ENCODE measurements at regions of chr9 and their contacts with region 1.

Region 1: GRCh38 chr9:114930056-114930812 is at the start of gene TNFSF8:
- DNase-seq: peak; percentile 90
- ATAC-seq: peak; percentile 68
- H3K4me3 Mint-ChIP-seq: peak within 1 kb of the TSS; percentile 99
- H3K27ac Mint-ChIP-seq: peak within 1 kb of the TSS; percentile 99
- H3K4me1 Mint-ChIP-seq: peaks cover 54% of the 10 kb centered on the region
- H3K27me3 Mint-ChIP-seq: no peaks in the 10 kb centered on the region
- total RNA-seq, gene TNFSF8: 52.6 to 55.3 TPM

Region 2: DNA sequence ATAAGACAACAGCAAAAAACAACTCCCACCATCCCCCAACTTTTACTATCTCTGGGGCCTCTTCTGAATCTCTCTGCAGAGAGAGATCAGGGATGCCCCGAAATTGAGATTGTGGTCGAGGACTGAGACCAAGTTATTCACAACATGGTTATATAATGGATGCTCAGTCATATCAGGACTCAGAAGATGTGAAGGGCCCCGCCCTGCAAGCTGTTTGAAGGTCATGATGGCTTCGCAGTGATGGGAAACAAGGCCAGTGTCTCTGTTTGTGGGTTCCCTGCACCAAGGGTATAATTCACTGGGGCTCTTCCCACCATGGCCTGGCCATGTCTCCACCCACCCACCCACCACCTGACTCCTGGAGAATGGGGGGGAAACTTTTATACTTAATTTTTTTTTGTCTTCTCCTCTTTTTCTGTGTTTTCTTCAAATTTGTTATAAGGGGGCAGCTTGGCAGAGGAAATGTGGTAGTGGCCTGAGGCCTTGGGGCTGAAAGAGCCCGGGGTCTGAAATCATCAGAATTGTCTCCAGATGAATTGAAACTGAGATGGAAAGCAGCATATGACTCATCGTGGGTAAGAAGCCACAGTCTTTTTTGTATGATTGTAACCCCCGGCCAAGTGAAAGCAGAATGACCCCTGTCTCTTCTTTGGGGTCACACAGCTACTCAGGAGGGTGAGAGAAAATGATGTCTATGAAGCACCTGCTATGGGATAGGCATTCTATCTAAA is 233.3 kb before region 1 on chr9:
- CTCF ChIA-PET with region 1: interaction called, 6 read pairs
- POLR2A ChIA-PET with region 1: interaction called, 42 read pairs
- DNase-seq: peak; percentile 89
- ATAC-seq: peak; percentile 76
- H3K4me3 Mint-ChIP-seq: peak overlapping the region; percentile 52
- H3K27ac Mint-ChIP-seq: peak overlapping the region; percentile 98
- H3K4me1 Mint-ChIP-seq: peaks cover 94% of the 10 kb centered on the region
- H3K27me3 Mint-ChIP-seq: no peaks in the 10 kb centered on the region

Region 3: GRCh38 chr9:114894801-114895433 is 35.3 kb before region 1 on chr9:
- CTCF ChIA-PET with region 1: interaction called, 18 read pairs
- POLR2A ChIA-PET with region 1: interaction called, 28 read pairs
- DNase-seq: peak; percentile 59
- ATAC-seq: peak; percentile 22
- H3K4me3 Mint-ChIP-seq: no peak overlapping the region
- H3K27ac Mint-ChIP-seq: peak overlapping the region; percentile 79
- H3K4me1 Mint-ChIP-seq: peaks cover 52% of the 10 kb centered on the region
- H3K27me3 Mint-ChIP-seq: no peaks in the 10 kb centered on the region

Region 4: DNA sequence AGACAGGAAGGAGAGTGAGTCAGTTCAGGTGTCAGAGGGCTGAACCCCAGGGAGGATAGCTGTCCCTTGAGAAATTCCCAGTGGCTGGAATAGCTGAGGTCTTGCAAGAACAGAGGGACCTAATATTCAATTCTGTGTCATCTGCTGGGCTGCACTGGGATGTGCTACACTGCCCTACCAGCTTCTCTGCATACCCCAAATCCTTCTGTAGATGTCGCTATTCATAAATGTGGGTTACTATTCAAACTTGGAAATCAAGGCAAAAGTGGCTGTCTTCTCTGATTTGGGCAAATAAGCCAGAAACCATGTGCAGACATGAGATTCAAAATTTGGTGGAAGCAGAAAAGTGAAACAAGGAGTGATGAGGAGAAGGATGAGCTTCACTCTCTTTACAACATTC is 16.1 kb before region 1 on chr9:
- CTCF ChIA-PET with region 1: interaction called, 114 read pairs
- POLR2A ChIA-PET with region 1: interaction called, 90 read pairs
- DNase-seq: no peak
- ATAC-seq: no peak
- H3K4me3 Mint-ChIP-seq: no peak overlapping the region
- H3K27ac Mint-ChIP-seq: peak overlapping the region; percentile 50
- H3K4me1 Mint-ChIP-seq: peaks cover 86% of the 10 kb centered on the region
- H3K27me3 Mint-ChIP-seq: no peaks in the 10 kb centered on the region

Region 5: GRCh38 chr9:114945616-114946412 is 15.6 kb after region 1 on chr9:
- CTCF ChIA-PET with region 1: interaction called, 12 read pairs
- POLR2A ChIA-PET with region 1: interaction called, 18 read pairs
- DNase-seq: no peak
- ATAC-seq: no peak
- H3K4me3 Mint-ChIP-seq: no peak overlapping the region
- H3K27ac Mint-ChIP-seq: no peak overlapping the region
- H3K4me1 Mint-ChIP-seq: peaks cover 25% of the 10 kb centered on the region
- H3K27me3 Mint-ChIP-seq: no peaks in the 10 kb centered on the region

Region 6: DNA sequence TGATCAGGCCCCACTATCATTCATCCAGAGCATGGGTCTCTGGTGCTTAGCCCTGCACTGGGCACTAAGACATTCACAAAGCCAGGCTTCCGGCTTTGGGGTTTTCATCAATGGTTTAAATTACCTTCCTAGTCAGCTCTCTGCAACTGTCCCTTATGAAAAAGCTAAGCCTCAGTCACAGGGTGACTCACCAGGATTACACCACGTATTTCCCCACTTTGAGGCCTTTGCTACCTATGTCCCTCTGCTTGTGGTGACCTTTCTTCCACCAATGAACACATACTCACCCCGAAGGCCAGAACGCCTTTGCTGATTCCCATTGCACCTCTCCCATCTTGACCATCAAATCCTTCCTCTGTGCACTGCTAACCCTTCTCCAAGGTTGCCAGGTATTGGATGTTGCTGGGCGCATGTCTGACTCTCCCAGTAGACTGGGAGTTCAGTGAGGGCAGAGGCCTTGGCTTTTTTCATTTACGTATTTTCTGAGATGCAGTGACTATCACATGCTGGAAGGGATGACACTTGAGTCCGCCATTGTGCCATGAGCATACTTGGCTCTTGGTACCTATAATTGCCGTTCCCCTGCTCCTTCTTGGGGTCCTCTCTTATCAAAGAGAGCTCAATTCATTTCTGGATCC is 58.8 kb after region 1 on chr9:
- CTCF ChIA-PET with region 1: interaction called, 10 read pairs
- POLR2A ChIA-PET with region 1: interaction called, 20 read pairs
- DNase-seq: peak; percentile 26
- ATAC-seq: peak; percentile 7
- H3K4me3 Mint-ChIP-seq: no peak overlapping the region
- H3K27ac Mint-ChIP-seq: peak overlapping the region; percentile 79
- H3K4me1 Mint-ChIP-seq: peaks cover 43% of the 10 kb centered on the region
- H3K27me3 Mint-ChIP-seq: no peaks in the 10 kb centered on the region

Region 7: DNA sequence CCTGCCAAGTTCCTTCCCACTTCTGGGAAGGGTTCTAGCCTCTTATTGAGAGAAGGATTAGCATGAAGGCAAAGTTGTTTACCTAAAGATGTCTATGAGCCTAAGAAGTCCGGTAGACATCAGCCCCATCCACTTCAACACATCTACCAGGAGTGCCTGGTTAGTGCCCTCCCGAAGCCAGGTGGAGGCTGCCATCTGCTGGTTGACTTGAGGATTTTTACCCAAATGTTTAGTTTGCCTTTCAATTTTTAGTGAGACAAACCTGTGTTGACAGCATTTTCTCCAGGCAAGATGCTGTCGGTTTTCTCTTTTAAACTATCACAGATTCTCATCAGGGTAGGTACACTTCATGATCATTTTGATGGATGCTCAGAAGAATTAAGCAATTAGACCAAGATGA is 83.8 kb after region 1 on chr9:
- CTCF ChIA-PET with region 1: interaction called, 46 read pairs
- POLR2A ChIA-PET with region 1: interaction called, 10 read pairs
- DNase-seq: peak; percentile 89
- ATAC-seq: peak; percentile 93
- H3K4me3 Mint-ChIP-seq: no peak overlapping the region
- H3K27ac Mint-ChIP-seq: peak overlapping the region; percentile 70
- H3K4me1 Mint-ChIP-seq: peaks cover 48% of the 10 kb centered on the region
- H3K27me3 Mint-ChIP-seq: no peaks in the 10 kb centered on the region

Region 8: GRCh38 chr9:115058684-115059315 is 128.6 kb after region 1 on chr9:
- CTCF ChIA-PET with region 1: no interaction called
- POLR2A ChIA-PET with region 1: no interaction called
- DNase-seq: no peak
- ATAC-seq: no peak
- H3K4me3 Mint-ChIP-seq: no peak overlapping the region
- H3K27ac Mint-ChIP-seq: no peak overlapping the region
- H3K4me1 Mint-ChIP-seq: no peaks in the 10 kb centered on the region
- H3K27me3 Mint-ChIP-seq: peaks cover 25% of the 10 kb centered on the region